HepG2 (cell line): ENCODE measurements at regions of chr4 and their contacts with region 1.

Region 1: GRCh38 chr4:106266201-106266600 is 49.8 kb downstream of the TBCK start:
- DNase-seq: peak; percentile 73
- ATAC-seq: peak; percentile 73; the same call in 2 of the 3 replicates
- H3K4me3 ChIP-seq: no peak overlapping the region
- H3K27ac ChIP-seq: peak overlapping the region; percentile 94
- H3K4me1 ChIP-seq: peaks cover 94% of the 10 kb centered on the region
- H3K27me3 ChIP-seq: no peaks in the 10 kb centered on the region
- CTCF ChIP-seq: peak; percentile 81
- EP300 ChIP-seq: no peak
- POLR2A ChIP-seq: no peak
- RAD21 ChIP-seq: peak; percentile 63; the same call in 1 of the 2 replicates

Region 2: GRCh38 chr4:106315968-106316772 is 50.0 kb after region 1 on chr4 and contains the starts of genes AIMP1 and TBCK:
- CTCF ChIA-PET with region 1: no interaction called
- POLR2A ChIA-PET with region 1: interaction called, 26 read pairs
- in situ Hi-C with region 1: no loop called
- intact Hi-C with region 1: loop called (anchors 2 kb)
- DNase-seq: peak; percentile 88
- ATAC-seq: peak; percentile 92
- H3K4me3 ChIP-seq: peak within 1 kb of the TSS; percentile 89 to 97 (median 93)
- H3K27ac ChIP-seq: peak within 1 kb of the TSS; percentile 99
- H3K4me1 ChIP-seq: peaks cover 59% of the 10 kb centered on the region
- H3K27me3 ChIP-seq: no peaks in the 10 kb centered on the region; a peak in 2 of 5 replicates
- CTCF ChIP-seq: no peak
- EP300 ChIP-seq: no peak; a peak in 1 of 4 replicates
- POLR2A ChIP-seq: peak; percentile 72 to 84
- RAD21 ChIP-seq: no peak; the same call in 1 of the 2 replicates
- total RNA-seq, gene AIMP1: 82.9 and 116 TPM in 2 replicates
- total RNA-seq, gene TBCK: 44.3 and 51.0 TPM in 2 replicates

Region 3: DNA sequence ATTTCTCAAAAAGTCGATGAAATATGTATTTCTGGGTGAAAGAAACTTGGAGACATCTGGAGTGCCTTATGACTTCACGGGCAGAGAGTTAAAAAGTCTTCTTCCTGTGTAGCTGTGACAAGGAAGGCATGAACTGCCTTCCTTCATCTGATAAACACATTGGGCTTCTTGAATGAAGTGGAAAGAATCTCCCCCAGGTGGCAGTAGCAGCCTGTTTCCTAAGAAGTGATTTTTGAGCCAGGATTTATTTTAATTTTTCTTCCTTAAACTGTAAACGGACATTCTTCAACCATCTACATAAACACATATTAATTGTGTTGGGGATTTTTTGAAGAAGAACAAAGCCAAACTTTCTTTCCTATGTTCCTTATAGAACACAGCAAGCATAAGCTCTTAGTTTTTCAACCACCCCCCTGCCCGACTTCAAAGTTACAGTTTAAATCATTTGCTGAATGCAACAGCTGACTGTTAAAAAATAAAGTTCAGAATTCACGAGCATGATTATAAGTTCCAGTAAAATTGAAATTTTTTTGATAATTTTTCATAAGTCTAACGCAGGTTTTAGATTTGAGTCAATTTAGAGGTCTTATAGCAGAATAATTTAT is 103.4 kb after region 1 on chr4:
- CTCF ChIA-PET with region 1: interaction called, 5 read pairs
- POLR2A ChIA-PET with region 1: interaction called, 5 read pairs
- in situ Hi-C with region 1: no loop called
- intact Hi-C with region 1: loop called (anchors 1 kb)
- DNase-seq: peak; percentile 42
- ATAC-seq: peak; percentile 67
- H3K4me3 ChIP-seq: no peak overlapping the region
- H3K27ac ChIP-seq: no peak overlapping the region
- H3K4me1 ChIP-seq: peaks cover 17% of the 10 kb centered on the region
- H3K27me3 ChIP-seq: no peaks in the 10 kb centered on the region
- CTCF ChIP-seq: peak; percentile 73
- EP300 ChIP-seq: no peak
- POLR2A ChIP-seq: no peak
- RAD21 ChIP-seq: peak; percentile 67; the same call in 1 of the 2 replicates

Region 4: DNA sequence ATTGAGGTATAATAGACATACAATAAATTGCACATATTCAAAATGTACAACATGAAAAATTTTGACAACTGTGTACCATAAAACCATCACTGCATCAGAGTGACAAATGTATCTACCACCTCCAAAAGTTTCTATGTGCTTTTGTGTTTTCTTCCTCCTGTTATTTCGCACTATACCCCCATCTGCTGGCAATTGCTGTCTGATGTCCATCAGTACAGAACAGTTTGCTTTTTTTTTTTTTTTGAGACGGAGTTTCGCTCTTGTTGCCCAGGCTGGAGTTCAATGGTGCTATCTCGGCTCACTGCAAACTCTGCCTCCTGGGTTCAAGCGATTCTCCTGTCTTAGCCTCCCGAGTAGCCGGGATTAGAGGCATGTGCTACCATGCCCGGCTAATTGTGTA is 256.6 kb after region 1 on chr4:
- CTCF ChIA-PET with region 1: no interaction called
- POLR2A ChIA-PET with region 1: no interaction called
- in situ Hi-C with region 1: no loop called
- intact Hi-C with region 1: loop called (anchors 5 kb)
- DNase-seq: peak; percentile 37
- ATAC-seq: peak; percentile 86
- H3K4me3 ChIP-seq: peak overlapping the region in 1 of 3 experiments; percentile 33; a peak in 2 of 6 replicates
- H3K27ac ChIP-seq: no peak overlapping the region
- H3K4me1 ChIP-seq: no peaks in the 10 kb centered on the region
- H3K27me3 ChIP-seq: no peaks in the 10 kb centered on the region
- CTCF ChIP-seq: peak; percentile 49
- EP300 ChIP-seq: no peak
- POLR2A ChIP-seq: no peak
- RAD21 ChIP-seq: no peak

Region 5: DNA sequence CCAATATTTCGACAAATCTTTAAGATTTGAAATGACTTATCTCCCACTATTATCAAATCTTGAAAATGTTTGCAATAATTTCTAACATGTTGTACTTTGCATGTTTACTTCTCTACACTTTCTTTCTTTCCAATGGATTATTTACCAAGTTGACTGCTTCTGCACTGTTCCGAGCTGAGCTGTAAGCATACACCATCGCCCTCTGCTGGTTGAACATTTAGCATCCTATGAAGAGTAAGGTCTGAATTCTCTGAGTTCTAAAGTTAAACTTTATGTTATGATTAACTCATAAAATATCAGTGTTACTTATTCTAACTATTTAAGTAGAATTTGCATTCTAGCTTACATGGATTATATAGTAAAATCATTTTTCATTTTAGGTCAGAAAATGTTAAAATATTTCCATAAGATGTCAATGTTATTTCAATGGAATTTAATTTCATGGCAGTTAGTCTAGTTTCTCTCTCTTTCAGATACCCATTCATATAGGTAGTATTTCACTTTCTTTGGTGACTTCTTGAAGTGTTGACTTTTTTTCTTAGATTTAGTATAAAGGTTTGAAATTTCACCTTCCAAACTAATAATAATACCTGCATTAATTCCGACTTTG is 632.5 kb after region 1 on chr4:
- CTCF ChIA-PET with region 1: no interaction called
- POLR2A ChIA-PET with region 1: interaction called, 3 read pairs
- in situ Hi-C with region 1: no loop called
- intact Hi-C with region 1: loop called (anchors 5 kb)
- DNase-seq: peak; percentile 32
- ATAC-seq: peak; percentile 85
- H3K4me3 ChIP-seq: no peak overlapping the region
- H3K27ac ChIP-seq: no peak overlapping the region
- H3K4me1 ChIP-seq: no peaks in the 10 kb centered on the region
- H3K27me3 ChIP-seq: no peaks in the 10 kb centered on the region
- CTCF ChIP-seq: peak; percentile 62
- EP300 ChIP-seq: no peak
- POLR2A ChIP-seq: no peak
- RAD21 ChIP-seq: no peak